ENCODE measurements at regions of chr3 and their contacts with region 1.

Region 1: GRCh38 chr3:161409069-161409468 is 37.8 kb upstream of the SPTSSB start:
- DNase-seq: peak; percentile 28
- H3K4me3 ChIP-seq: no peak overlapping the region
- H3K27ac ChIP-seq: no peak overlapping the region
- H3K4me1 ChIP-seq: peaks cover 0 to 10% of the 10 kb centered on the region in 2 experiments; a peak in 1 of 4 replicates
- H3K27me3 ChIP-seq: no peaks in the 10 kb centered on the region
- CTCF ChIP-seq: peak; percentile 67
- EP300 ChIP-seq: no peak
- RAD21 ChIP-seq: peak; percentile 89

Region 2: GRCh38 chr3:161274719-161275298 is 134.3 kb before region 1 on chr3:
- CTCF ChIA-PET with region 1: interaction called, 60 read pairs
- POLR2A ChIA-PET with region 1: no interaction called
- DNase-seq: peak; percentile 27
- H3K4me3 ChIP-seq: peak overlapping the region in 1 of 2 experiments; percentile 23; a peak in 1 of 4 replicates
- H3K27ac ChIP-seq: no peak overlapping the region
- H3K4me1 ChIP-seq: peaks cover 0 to 3% of the 10 kb centered on the region in 2 experiments; a peak in 1 of 4 replicates
- H3K27me3 ChIP-seq: no peaks in the 10 kb centered on the region
- CTCF ChIP-seq: peak; percentile 82
- EP300 ChIP-seq: no peak
- RAD21 ChIP-seq: peak; percentile 62

Region 3: GRCh38 chr3:161305095-161305991 is 103.7 kb before region 1 on chr3:
- CTCF ChIA-PET with region 1: interaction called, 17 read pairs
- POLR2A ChIA-PET with region 1: no interaction called
- DNase-seq: peak; percentile 28
- H3K4me3 ChIP-seq: no peak overlapping the region; a peak in 1 of 4 replicates
- H3K27ac ChIP-seq: no peak overlapping the region
- H3K4me1 ChIP-seq: no peaks in the 10 kb centered on the region
- H3K27me3 ChIP-seq: no peaks in the 10 kb centered on the region
- CTCF ChIP-seq: peak; percentile 84
- EP300 ChIP-seq: no peak
- RAD21 ChIP-seq: peak; percentile 48

Region 4: DNA sequence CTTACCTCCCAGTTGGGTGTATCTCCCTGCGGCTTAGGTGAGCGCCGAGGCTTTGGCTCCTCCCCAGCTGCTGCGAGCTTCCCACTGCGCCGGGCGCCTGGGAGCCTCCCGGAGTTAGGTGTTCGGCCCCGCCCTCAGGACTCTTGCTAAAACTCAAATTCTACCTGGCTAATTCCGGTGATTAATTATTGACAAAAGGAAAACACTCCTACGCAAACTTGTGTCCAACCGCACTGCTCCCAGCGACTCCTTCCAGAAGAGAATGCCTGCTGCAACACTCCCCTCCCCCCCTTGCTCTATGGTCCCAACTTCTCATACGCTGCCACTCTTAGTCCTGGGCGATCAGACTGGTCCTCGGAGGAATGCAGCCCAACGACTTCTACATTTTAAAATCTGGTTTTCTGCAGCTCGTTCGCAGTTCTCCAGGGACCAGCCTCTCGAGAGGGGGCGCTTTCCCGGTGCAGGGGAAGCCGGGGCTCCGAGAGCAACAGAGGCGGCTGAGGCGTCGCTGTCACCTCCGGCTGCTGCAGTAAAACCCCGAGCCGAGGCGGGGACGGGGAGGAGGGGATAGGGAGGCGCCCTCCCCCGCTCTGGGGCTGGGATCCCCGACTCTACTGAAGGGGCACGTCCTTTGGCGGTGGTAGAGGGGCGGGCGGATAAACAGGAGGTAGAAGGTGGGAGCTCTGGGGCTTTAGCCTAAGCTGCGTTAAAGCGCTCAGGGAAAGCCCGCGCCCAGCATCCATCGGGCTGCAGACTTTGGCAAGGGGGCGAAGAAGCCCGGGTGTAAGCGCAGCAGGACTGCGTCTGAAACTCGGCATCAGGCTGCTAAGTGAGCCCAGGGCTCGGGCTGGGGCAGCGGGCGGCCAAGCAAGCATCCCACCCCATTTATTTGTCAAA is 37.4 kb before region 1 on chr3 and contains the start of gene SPTSSB:
- CTCF ChIA-PET with region 1: interaction called, 23 read pairs
- POLR2A ChIA-PET with region 1: interaction called, 5 read pairs
- DNase-seq: peak; percentile 84
- H3K4me3 ChIP-seq: peak within 1 kb of the TSS; percentile 55 to 67
- H3K27ac ChIP-seq: peak within 1 kb of the TSS in 1 of 2 experiments; percentile 75; a peak in 1 of 4 replicates
- H3K4me1 ChIP-seq: peaks cover 0 to 12% of the 10 kb centered on the region in 2 experiments; a peak in 1 of 4 replicates
- H3K27me3 ChIP-seq: peaks cover 36% of the 10 kb centered on the region
- CTCF ChIP-seq: peak; percentile 33
- EP300 ChIP-seq: no peak
- RAD21 ChIP-seq: peak; percentile 36
- polyA plus RNA-seq, gene SPTSSB: 0.07 and 0.57 TPM in 2 replicates

Region 5: DNA sequence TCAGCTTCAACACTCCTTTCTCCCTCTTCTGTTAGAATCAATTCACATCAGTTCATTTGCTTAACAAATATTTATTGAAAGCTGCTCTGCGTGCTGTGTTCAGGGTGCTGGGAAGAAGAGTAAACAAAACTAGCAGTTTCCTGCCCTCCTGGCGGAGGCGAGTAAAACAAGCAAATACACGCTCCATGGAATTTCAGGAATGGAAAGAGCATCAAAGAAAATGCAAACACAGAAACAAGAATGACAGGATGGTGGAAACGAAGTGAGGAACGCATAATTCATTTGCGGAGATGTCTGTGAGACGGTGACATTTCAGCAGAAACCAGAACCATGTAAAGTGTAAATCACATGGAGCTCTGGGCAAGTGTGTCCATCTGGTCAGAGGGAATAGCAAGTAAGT is 11.7 kb after region 1 on chr3:
- CTCF ChIA-PET with region 1: interaction called, 15 read pairs
- POLR2A ChIA-PET with region 1: no interaction called
- DNase-seq: no peak
- H3K4me3 ChIP-seq: no peak overlapping the region
- H3K27ac ChIP-seq: no peak overlapping the region
- H3K4me1 ChIP-seq: peaks cover under 1 to 14% of the 10 kb centered on the region in 2 experiments; a peak in 3 of 4 replicates
- H3K27me3 ChIP-seq: no peaks in the 10 kb centered on the region
- CTCF ChIP-seq: no peak
- EP300 ChIP-seq: no peak
- RAD21 ChIP-seq: no peak